Activated T-helper 1 cell treated with anti-CD3 and anti-CD28 coated beads, Interleukin-12 subunit alpha, Interleukin-12 subunit beta, Interleukin-2, Interleukin-4 antibody, amounts not matched to agents 30 ng/mL and 10 ng/mL and 1 ng/mL, durations not matched to agents 14 hours and 24 hours and 36 hours (primary cell): ENCODE measurements at regions of chr6 and their contacts with region 1.

Region 1: GRCh38 chr6:144653885-144654505 is 368.9 kb downstream of the UTRN start:
- DNase-seq: no peak
- H3K4me3 Mint-ChIP-seq: peak overlapping the region; percentile 4
- H3K27ac Mint-ChIP-seq: peak overlapping the region; percentile 35
- H3K4me1 Mint-ChIP-seq: peaks cover 31% of the 10 kb centered on the region
- H3K27me3 Mint-ChIP-seq: no peaks in the 10 kb centered on the region

Region 2: DNA sequence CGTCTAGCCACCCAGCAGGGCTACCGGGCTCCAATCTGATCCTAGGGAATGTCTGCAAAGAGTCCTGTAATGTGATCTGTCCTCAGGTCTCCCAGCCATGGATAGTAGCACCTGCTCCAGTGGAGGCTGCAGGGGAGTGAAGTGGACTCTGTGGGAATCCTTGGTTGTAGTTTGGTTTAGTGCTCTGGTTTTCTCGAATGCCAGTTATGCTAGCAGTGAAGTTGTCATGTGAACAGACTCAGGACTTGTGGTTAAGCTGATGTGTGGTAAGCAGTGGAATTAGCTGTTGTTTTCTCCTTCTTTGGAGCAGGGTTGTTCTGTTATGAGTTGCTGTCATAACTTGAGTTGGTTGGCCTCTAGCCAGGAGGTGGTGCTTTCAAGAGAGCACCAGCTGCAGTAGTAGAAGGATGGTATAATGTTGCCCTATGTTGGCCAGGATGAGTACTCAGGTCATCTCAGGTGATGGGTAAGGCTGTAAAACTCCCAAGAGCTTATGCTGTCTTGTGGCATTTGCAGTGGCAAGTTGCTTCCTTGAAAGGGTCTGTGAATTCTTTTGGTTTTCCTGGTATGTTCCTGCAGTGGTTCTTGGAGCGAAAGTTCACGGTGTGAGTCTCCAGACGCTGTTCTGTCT is 21.4 kb after region 1 on chr6:
- intact Hi-C with region 1: loop called (anchors 1 kb)
- DNase-seq: peak; percentile 34
- H3K4me3 Mint-ChIP-seq: peak overlapping the region; percentile 41
- H3K27ac Mint-ChIP-seq: peak overlapping the region; percentile 18
- H3K4me1 Mint-ChIP-seq: peaks cover 51% of the 10 kb centered on the region
- H3K27me3 Mint-ChIP-seq: no peaks in the 10 kb centered on the region

Region 3: DNA sequence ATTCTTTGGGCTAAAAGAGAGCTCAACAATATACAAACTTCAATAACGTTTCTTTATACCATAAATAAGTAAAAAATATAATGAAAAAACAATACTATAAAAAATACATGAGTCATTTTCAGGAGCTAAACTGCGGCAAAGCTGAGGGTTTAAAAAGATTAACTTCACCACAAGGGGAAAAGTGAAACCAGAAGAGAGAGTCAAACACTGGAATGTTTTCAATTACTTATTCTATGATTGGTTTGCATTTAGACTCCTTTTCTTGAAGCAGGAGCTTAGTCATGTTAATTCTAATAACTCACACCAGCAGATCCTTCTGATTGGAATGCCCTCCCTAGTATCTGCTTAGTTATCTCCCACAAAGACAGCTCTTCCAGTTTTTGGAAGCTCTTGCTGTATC is 258.5 kb after region 1 on chr6:
- intact Hi-C with region 1: no loop called
- DNase-seq: no peak
- H3K4me3 Mint-ChIP-seq: no peak overlapping the region
- H3K27ac Mint-ChIP-seq: no peak overlapping the region
- H3K4me1 Mint-ChIP-seq: peaks cover 5% of the 10 kb centered on the region
- H3K27me3 Mint-ChIP-seq: peaks cover 8% of the 10 kb centered on the region

Region 4: DNA sequence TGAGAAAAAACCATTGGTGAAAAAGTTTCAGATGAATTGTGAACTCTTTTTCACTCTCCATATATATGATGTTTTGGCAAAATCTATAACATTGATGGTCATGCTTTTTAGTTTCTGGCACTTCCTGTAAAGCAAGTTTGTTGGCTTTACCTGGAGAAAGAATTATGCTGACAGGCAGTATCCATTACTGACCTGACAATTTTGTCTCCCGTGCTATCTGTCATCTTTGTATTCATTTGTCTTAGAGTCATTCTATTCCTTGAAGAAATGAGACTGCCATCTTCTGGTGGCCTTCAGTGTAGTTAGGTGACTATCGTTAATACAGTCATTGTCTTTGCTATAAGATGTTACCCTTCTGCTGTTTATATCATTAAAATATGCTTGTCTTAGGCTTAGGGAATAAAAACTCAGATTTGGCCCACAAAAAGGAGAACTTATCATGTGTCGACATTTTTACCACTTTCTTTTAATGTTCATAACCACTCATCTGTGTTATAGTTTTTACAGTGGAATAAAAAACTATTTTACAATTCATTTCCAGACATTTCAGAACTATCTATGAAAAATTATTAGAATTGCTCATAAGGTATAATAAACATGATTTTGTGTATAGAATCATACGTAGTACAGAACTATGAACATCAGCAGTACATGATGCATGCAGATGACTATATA is 374.3 kb after region 1 on chr6:
- intact Hi-C with region 1: loop called (anchors 5 kb)
- DNase-seq: no peak
- H3K4me3 Mint-ChIP-seq: no peak overlapping the region
- H3K27ac Mint-ChIP-seq: no peak overlapping the region
- H3K4me1 Mint-ChIP-seq: peaks cover under 1% of the 10 kb centered on the region
- H3K27me3 Mint-ChIP-seq: peaks cover 28% of the 10 kb centered on the region